Transverse colon (tissue), 4 donors: ENCODE measurements at regions of chr2 and their contacts with region 1.

Region 1: DNA sequence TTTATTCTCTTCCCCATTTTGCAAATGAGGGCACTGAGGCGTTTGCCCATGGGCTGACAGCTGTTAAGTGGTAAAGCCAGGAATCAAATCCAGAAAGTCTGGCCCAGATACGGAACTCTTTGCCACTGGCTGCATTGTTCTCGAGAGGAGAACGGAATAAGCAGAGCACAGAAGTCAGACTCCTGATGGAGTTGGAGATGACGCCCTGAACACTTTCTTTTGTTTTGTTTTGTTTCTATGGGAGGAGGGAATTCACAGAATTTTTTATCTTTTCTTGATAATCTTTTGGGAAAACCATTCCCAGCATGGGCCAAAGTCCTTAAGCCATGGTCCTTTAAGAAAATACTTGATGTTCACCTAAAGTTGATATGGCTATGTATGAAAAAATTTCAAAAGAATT is 322.2 kb downstream of the RDH14 start:
- DNase-seq: no peak
- H3K4me3 ChIP-seq: no peak overlapping the region
- H3K27ac ChIP-seq: no peak overlapping the region
- H3K4me1 ChIP-seq: no peaks in the 10 kb centered on the region
- H3K27me3 ChIP-seq: no peaks in the 10 kb centered on the region
- CTCF ChIP-seq: no peak
- EP300 ChIP-seq: no peak
- POLR2A ChIP-seq: no peak

Region 2: GRCh38 chr2:17398770-17399169 is 839.4 kb before region 1 on chr2:
- in situ Hi-C with region 1: no loop called
- intact Hi-C with region 1: loop called (anchors 5 kb)
- DNase-seq: no peak
- H3K4me3 ChIP-seq: no peak overlapping the region
- H3K27ac ChIP-seq: no peak overlapping the region
- H3K4me1 ChIP-seq: no peaks in the 10 kb centered on the region
- H3K27me3 ChIP-seq: no peaks in the 10 kb centered on the region
- CTCF ChIP-seq: no peak
- EP300 ChIP-seq: no peak
- POLR2A ChIP-seq: no peak